ENCODE measurements at regions of chr6 and their contacts with region 1.

Region 1: GRCh38 chr6:90296346-90297114 is at the start of gene BACH2:
- DNase-seq: peak; percentile 90 to 95 (median 92)
- H3K4me3 ChIP-seq: peak within 1 kb of the TSS; percentile 56 to 95 (median 78)
- H3K27ac ChIP-seq: peak within 1 kb of the TSS; percentile 7 to 97 (median 94)
- H3K27me3 ChIP-seq: no peaks in the 10 kb centered on the region
- CTCF ChIP-seq: peak in 29 of 56 donors; percentile 10 to 53 (median 25)
- total RNA-seq, gene BACH2: 6.8 to 31.2 (median 16.9) TPM

Region 2: GRCh38 chr6:89829591-89830385 is 466.7 kb before region 1 on chr6 and contains the start of gene CASP8AP2:
- intact Hi-C with region 1: no loop called
- DNase-seq: peak; percentile 68 to 94 (median 92)
- H3K4me3 ChIP-seq: peak within 1 kb of the TSS; percentile 63 to 99 (median 91)
- H3K27ac ChIP-seq: peak within 1 kb of the TSS in 52 of 59 donors; percentile 0 to 88 (median 63)
- H3K27me3 ChIP-seq: no peaks in the 10 kb centered on the region
- CTCF ChIP-seq: peak in 4 of 56 donors; percentile 9 to 25 (median 22)
- total RNA-seq, gene CASP8AP2: 19.0 to 31.0 (median 24.1) TPM

Region 3: GRCh38 chr6:89940225-89941027 is 356.1 kb before region 1 on chr6:
- intact Hi-C with region 1: loop called (anchors 2 to 10 kb)
- DNase-seq: peak; percentile 44 to 92 (median 80)
- H3K4me3 ChIP-seq: peak overlapping the region in 27 of 59 donors; percentile 2 to 47 (median 30)
- H3K27ac ChIP-seq: peak overlapping the region in 58 of 59 donors; percentile 22 to 92 (median 84)
- H3K27me3 ChIP-seq: no peaks in the 10 kb centered on the region
- CTCF ChIP-seq: peak; percentile 23 to 92 (median 81)

Region 4: DNA sequence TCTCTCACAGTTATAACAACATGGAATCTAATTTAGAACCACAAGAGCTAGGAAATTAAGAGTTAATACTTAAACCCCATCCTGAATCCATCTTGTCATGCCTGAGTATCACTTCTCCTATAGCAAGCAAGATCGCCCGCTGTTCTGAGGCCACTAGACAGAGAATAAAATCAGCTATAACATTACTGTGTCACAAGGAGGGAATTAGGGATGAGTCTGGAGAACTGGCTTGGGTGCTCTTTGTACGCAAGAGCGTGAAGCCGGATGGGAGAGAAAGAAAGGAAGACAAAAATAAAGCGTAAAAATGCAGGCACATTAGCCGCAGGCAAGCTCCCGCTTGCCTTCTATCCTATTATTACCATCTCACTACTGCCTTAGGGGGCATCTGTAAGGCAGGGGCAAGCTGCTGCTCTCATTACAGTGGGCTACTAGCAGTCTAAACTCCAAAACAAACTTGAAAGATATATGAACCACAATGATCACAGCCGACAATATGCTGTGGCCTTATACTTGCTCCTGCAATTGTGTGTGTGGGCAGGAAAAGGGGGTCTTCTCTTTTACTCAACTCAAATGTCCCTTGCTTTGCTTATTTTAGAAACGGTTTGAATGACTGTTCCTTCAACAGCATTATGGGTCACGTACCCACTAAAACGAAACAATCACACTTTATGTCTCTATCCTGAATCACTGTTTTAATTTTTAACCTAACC is 320.4 kb before region 1 on chr6:
- intact Hi-C with region 1: loop called (anchors 2 to 5 kb)
- DNase-seq: no peak
- H3K4me3 ChIP-seq: peak overlapping the region in 1 of 59 donors; percentile 4
- H3K27ac ChIP-seq: peak overlapping the region in 6 of 59 donors; percentile 5 to 27 (median 18)
- H3K27me3 ChIP-seq: no peaks in the 10 kb centered on the region
- CTCF ChIP-seq: no peak

Region 5: GRCh38 chr6:90019216-90019615 is 277.3 kb before region 1 on chr6:
- intact Hi-C with region 1: no loop called
- DNase-seq: no peak
- H3K4me3 ChIP-seq: no peak overlapping the region
- H3K27ac ChIP-seq: no peak overlapping the region
- H3K27me3 ChIP-seq: no peaks in the 10 kb centered on the region
- CTCF ChIP-seq: no peak

Region 6: DNA sequence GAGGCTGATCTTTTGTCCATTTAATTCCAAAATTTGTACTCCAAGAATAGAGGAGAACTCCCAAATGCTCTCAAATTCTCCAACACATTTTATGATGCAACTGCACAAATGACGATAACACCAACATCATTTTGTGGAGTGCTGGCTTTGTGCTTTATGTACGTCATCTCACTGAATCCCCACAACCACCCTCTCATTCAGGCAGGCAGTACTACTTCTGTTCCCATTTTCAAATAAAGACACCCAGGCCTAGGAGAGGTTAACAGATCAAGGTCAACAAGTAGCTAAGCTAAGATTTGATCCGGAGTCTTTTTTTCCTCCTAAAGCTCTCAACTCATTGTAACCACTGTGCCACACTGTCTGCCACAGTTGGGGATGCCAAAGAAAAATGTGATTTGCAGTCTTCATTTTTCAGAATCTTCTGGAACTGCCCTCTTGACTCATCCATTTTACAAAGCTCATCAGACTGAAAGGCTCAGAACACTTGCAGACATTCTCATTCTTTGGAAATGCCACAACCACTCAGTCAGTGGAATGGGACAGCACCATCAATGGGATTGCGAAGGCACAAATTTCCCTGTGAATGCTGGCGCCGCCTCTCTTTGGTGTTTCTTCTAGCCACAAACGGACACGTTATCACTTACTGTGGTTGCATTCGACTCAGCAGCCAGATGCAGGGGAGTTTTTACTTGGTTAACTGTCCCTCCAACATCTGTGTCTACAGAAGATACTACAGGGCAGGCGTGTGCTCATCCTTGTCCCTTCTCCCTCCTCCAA is 217.8 kb before region 1 on chr6:
- intact Hi-C with region 1: loop called in 1 of 2 experiments (anchors 5 kb)
- DNase-seq: no peak
- H3K4me3 ChIP-seq: no peak overlapping the region
- H3K27ac ChIP-seq: peak overlapping the region in 8 of 59 donors; percentile 1 to 44 (median 18)
- H3K27me3 ChIP-seq: no peaks in the 10 kb centered on the region
- CTCF ChIP-seq: no peak

Region 7: DNA sequence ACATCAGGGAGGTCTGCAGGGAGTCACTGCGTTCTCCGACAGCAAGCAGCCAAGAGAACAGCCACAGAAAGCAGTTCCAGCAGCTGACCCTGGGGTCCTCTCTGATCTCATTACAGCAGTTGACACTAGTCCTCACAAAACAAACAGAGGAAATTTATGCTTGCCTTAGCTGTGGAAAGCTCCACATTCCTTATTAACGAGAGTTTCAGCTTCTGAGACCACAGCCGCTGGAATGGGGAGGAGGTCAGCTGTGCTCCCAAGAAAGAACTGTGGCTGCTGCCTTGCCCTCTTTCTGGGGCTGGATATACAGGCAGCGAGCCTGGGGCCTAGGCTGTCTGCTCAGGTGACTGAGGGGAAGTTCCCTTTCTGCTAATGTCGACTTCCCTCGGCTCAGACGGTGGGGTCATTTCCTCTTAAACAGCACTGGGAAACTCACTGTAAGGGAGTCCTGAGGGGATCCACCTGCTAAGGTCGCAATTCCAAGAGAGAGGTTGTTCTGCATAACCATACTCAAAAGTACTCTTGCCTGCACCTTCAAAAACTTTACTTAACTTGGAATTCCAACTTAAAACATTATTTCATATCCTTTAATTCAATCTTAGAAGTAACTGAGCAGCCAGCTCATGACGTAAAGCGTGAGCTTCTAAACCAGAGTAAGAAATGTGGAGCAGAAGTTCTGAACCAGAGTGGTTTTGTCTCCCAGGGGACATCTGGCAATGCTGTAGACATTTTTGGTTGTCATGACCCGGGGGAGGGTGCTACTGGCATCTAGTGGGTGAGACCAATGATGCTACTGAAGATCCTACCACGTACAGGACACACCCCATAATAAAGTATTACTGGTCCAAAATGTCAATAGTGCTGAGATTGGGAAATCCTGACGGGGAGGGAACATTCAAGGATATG is 80.2 kb before region 1 on chr6:
- intact Hi-C with region 1: loop called (anchors 1 kb)
- DNase-seq: no peak
- H3K4me3 ChIP-seq: no peak overlapping the region
- H3K27ac ChIP-seq: peak overlapping the region in 28 of 59 donors; percentile 2 to 81 (median 32)
- H3K27me3 ChIP-seq: no peaks in the 10 kb centered on the region
- CTCF ChIP-seq: no peak

Region 8: GRCh38 chr6:90478789-90479602 is 182.5 kb after region 1 on chr6:
- intact Hi-C with region 1: loop called (anchors 5 kb)
- DNase-seq: peak; percentile 59 to 94 (median 86)
- H3K4me3 ChIP-seq: peak overlapping the region in 34 of 59 donors; percentile 2 to 46 (median 23)
- H3K27ac ChIP-seq: peak overlapping the region in 35 of 59 donors; percentile 2 to 79 (median 48)
- H3K27me3 ChIP-seq: no peaks in the 10 kb centered on the region
- CTCF ChIP-seq: peak; percentile 78 to 99 (median 95)